ENCODE measurements at regions of chr20 and their contacts with region 1.

Region 1: DNA sequence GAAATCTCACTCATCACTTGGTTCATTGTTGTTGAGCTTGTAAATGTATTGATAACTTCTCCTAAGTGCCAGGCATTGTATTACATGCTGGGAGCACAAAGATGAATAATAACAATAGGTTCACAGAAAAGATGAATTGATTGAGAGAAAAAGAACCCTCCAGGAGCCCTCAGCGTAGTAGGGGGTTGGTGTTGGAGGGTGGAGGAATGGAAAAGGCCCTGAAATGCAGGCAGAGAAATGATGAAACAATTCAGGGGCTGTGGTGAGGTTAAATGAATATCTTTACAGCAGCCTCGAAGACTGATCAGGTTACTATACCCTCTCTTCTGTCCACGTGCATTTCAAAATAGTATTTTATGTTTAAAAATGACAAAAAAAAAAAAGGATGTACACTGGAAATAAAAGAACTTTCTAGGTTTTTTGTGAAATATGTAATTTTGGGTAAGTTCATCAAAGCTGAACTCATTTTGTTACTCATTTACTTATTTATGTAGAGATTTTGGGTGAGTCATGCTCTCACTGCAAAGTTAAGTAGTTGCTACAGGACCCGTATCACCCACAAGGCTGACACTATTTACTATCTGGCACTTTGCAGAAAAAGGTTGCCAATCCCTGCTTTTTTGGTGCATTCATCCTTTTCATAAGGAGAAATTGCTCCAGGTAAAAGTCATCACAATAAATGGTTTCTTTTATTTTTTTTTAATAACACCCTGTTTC is 277.3 kb downstream of the ZNF217 start:
- DNase-seq: no peak
- ATAC-seq: no peak

Region 2: GRCh38 chr20:53296025-53296424 is 20.4 kb before region 1 on chr20:
- intact Hi-C with region 1: no loop called
- DNase-seq: no peak
- ATAC-seq: no peak

Region 3: DNA sequence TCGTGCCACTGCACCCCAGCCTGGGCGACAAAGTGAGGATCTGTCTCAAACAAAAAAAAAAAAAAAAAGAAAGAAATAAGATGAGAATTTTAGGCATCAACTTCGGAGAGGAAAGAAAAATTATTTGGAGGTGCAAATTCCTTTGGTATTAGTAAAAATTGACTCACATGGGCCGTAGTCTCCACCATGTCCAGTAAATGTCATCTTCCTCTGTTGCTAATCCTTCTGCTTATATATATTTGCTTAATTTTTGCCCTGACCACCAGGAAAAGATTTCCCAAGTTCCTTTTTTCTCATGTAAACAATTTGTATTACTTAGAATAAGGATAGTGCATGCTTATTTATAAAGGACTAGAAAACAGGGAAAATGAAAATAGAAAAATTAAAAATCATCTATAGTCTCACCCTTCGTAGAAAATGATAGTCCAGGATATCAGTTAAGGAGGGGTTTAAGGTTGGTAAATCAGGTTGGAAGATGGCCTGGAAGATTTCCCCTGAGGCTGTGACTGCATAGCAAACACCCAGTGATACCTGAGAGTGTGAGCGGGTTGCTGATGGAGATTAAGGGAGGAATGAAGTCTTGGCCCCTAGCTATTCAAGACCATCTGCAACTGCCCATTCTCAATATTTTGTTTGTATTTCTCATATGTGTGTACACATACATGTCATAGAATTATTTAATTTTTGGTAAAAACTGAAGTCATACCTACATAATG is 36.5 kb after region 1 on chr20:
- intact Hi-C with region 1: loop called (anchors 1 kb)
- DNase-seq: no peak
- ATAC-seq: no peak